ENCODE measurements at regions of chr18 and their contacts with region 1.

Region 1: GRCh38 chr18:49021433-49022129 is 70.8 kb upstream of the SMAD7 start:
- DNase-seq: peak; percentile 86
- ATAC-seq: peak; percentile 93
- H3K4me3 Mint-ChIP-seq: no peak overlapping the region
- H3K27ac Mint-ChIP-seq: peak overlapping the region; percentile 85
- H3K4me1 Mint-ChIP-seq: peaks cover 12% of the 10 kb centered on the region
- H3K27me3 Mint-ChIP-seq: no peaks in the 10 kb centered on the region; the same call in 1 of the 2 replicates
- CTCF ChIP-seq: peak; percentile 44

Region 2: DNA sequence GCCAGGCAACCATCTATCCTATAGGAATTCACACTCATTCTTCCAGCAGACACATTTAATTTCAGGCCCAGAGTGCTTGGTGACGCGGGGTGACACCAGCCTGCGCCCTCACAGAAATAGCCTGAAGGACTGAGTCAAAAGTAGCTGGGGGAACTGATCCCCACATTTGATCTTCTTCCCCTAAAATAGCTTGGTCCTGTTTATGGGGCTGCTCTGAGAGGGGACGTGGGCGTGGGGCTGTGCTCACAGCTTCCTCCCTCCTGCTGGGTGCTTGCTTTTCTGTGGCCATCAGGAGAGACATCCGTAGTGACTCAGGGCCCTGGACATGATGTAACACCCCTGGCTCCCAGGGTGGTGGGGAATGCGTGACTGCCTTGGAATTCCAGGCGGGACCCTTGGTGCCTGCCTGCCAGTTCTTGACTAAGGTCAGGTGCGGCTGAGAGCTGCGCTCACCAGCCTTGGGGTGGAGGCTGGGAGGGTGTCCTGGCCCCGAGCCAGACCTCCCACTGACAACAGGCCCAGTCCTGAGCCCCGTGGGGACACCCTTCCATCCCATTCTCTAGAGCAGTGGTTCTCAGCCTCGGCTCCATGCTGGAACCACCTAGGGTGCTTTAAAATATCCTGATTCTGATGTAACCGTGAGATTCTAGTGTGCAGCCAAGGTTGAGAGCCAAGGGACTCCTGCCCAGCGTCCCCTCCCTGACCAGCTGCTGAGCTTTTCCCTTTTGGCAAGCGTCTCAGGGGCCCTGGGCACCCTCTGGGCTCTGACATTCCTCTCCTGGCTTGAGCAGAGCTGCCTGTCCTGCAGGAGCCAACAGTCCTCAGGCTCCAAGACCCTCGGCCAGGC is 23.4 kb before region 1 on chr18:
- CTCF ChIA-PET with region 1: interaction called, 16 read pairs
- POLR2A ChIA-PET with region 1: no interaction called
- DNase-seq: peak; percentile 54
- ATAC-seq: peak; percentile 63
- H3K4me3 Mint-ChIP-seq: no peak overlapping the region
- H3K27ac Mint-ChIP-seq: peak overlapping the region; percentile 51
- H3K4me1 Mint-ChIP-seq: peaks cover 26% of the 10 kb centered on the region
- H3K27me3 Mint-ChIP-seq: peaks cover 5% of the 10 kb centered on the region
- CTCF ChIP-seq: no peak